K562 (cell line): ENCODE measurements at regions of chr3 and their contacts with region 1.

Region 1: GRCh38 chr3:123584988-123585937 is at the start of gene HACD2:
- DNase-seq: peak; percentile 88 to 95 (median 89)
- ATAC-seq: peak; percentile 98
- H3K4me3 ChIP-seq: peak within 1 kb of the TSS; percentile 85
- H3K27ac ChIP-seq: peak within 1 kb of the TSS; percentile 96
- H3K4me1 ChIP-seq: peaks cover 4% of the 10 kb centered on the region in 2 experiments; a peak in 1 of 5 replicates
- H3K27me3 ChIP-seq: no peaks in the 10 kb centered on the region
- CTCF ChIP-seq: no peak
- EP300 ChIP-seq: no peak
- POLR2A ChIP-seq: peak; percentile 69
- RAD21 ChIP-seq: no peak
- polyA plus RNA-seq, gene HACD2: 1.3 to 1.6 TPM

Region 2: GRCh38 chr3:123618768-123619484 is 33.7 kb after region 1 on chr3:
- CTCF ChIA-PET with region 1: no interaction called
- POLR2A ChIA-PET with region 1: no interaction called
- in situ Hi-C with region 1: no loop called
- intact Hi-C with region 1: loop called (anchors 2 kb)
- DNase-seq: peak in 1 of 4 experiments; percentile 29
- ATAC-seq: peak; percentile 31; the same call in 2 of the 3 replicates
- H3K4me3 ChIP-seq: no peak overlapping the region
- H3K27ac ChIP-seq: no peak overlapping the region
- H3K4me1 ChIP-seq: peaks cover 0 to 18% of the 10 kb centered on the region in 2 experiments; a peak in 4 of 5 replicates
- H3K27me3 ChIP-seq: peaks cover 0 to 5% of the 10 kb centered on the region in 2 experiments; a peak in 1 of 5 replicates
- CTCF ChIP-seq: no peak
- EP300 ChIP-seq: no peak
- POLR2A ChIP-seq: no peak
- RAD21 ChIP-seq: no peak